ENCODE measurements at regions of chr20 and their contacts with region 1.

Region 1: GRCh38 chr20:23061734-23062561 is 12.5 kb upstream of the THBD start:
- DNase-seq: peak in 1 of 10 donors; percentile 55
- H3K4me3 ChIP-seq: no peak overlapping the region
- H3K27ac ChIP-seq: peak overlapping the region in 27 of 59 donors; percentile 3 to 75 (median 35)
- H3K27me3 ChIP-seq: no peaks in the 10 kb centered on the region
- CTCF ChIP-seq: peak in 37 of 56 donors; percentile 10 to 54 (median 31)

Region 2: GRCh38 chr20:23331450-23332350 is 269.8 kb after region 1 on chr20:
- intact Hi-C with region 1: loop called in 1 of 2 experiments (anchors 10 kb)
- DNase-seq: no peak
- H3K4me3 ChIP-seq: no peak overlapping the region
- H3K27ac ChIP-seq: no peak overlapping the region
- H3K27me3 ChIP-seq: peaks cover 0 to 3% (median 0%) of the 10 kb centered on the region in 45 donors
- CTCF ChIP-seq: no peak

Region 3: DNA sequence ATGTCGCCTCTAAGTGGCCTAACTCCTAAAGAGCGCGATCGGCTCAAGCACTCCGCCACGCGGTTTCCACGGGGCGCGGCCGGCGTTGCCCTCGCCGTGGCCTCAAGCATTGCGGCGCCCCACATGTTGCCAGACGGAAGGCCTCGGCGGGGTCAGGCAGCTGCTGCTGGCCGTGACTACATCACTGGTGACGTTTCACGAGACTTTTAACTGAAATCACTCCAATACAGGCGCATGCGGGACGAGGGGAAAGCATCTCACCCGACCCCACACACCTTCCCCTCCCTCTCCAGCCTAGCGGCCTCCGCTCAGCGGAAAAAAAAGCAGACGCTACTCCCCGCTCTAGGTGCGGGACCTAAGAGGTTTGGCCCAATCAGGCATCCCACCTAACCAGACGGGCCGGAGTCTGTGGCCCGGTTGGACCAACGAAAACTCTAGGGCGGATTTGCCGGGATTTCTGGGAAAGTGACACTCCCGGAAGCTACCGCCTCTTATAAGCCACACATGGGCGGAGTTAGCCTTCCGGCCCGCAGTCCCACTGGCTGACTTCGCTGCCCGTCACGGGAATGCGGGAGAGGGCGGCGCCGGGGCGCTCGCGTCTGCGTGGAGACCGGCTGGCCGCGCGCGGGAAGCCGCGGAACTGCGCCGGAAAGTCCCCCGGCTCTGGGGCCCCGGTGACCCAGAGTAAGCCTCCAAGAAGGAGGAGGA is 288.4 kb after region 1 on chr20 and contains the start of gene NXT1:
- intact Hi-C with region 1: loop called in 1 of 2 experiments (anchors 10 kb)
- DNase-seq: peak; percentile 94 to 99 (median 98)
- H3K4me3 ChIP-seq: peak within 1 kb of the TSS; percentile 67 to 100 (median 97)
- H3K27ac ChIP-seq: peak within 1 kb of the TSS; percentile 84 to 100 (median 98)
- H3K27me3 ChIP-seq: no peaks in the 10 kb centered on the region
- CTCF ChIP-seq: peak in 11 of 56 donors; percentile 0 to 32 (median 20)
- total RNA-seq, gene NXT1: 3.2 to 13.1 (median 6.7) TPM